ENCODE measurements at regions of chr18 and their contacts with region 1.

Region 1: DNA sequence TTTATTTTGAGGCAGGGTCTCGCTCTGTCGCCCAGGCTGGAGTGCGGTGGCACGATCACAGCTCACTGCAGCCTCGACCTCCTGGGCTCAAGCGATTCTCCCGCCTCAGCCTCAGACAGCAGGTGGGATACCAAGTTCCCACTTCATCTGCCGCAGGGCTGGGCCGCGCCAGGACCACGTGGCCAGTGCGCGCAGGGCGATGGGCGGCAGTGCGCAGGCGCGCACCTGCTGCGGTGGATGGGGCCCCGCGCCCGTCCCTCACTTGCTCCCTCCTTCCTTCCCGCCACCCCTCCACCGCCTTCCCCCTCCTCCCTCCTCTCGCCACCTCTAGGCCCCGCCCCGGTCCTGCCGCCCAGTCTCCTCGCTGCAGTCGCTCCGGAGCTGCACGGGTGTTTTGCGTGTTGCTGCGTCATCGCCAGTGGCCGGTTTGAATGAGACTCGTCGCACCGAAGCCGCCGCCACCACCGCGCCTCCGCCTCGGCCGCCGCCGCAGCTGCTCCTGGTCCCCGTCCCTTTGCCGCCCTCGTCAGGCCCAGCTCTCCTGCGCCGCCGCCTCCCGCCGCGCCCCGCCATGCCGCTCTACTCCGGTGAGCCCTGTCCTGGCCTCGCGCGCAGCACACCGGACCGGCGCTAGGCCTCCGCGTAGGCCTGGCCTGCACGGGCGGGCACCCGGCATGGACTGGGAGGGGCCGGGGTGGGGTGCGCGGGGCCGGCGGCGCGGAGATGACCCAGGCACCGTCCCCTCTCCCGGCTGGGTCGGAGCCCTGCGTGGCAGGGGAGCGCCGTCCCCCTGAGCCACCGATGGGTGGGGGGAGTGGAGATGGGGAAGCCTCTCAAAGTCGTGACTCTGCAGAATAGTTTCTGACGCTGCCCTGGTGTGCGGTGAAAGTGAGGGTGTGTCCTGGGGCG is at the start of gene USP14:
- DNase-seq: peak; percentile 96 to 98 (median 97)
- ATAC-seq: peak; percentile 94 to 99 (median 98)
- H3K4me3 ChIP-seq: peak within 1 kb of the TSS; percentile 75 to 97 (median 87)
- H3K27ac ChIP-seq: peak within 1 kb of the TSS; percentile 20 to 91 (median 83)
- H3K4me1 ChIP-seq: peaks cover 0 to 27% (median 15%) of the 10 kb centered on the region in 12 donors
- H3K27me3 ChIP-seq: no peaks in the 10 kb centered on the region
- CTCF ChIP-seq: peak in 2 of 12 donors; percentile 20 to 28
- POLR2A ChIP-seq: peak in 1 of 2 donors; percentile 44
- total RNA-seq, gene USP14: 19.1 to 61.5 (median 48.9) TPM

Region 2: GRCh38 chr18:136433-136832 is 21.9 kb before region 1 on chr18:
- intact Hi-C with region 1: loop called in 1 of 10 experiments (anchors 2 kb)
- DNase-seq: no peak
- ATAC-seq: no peak
- H3K4me3 ChIP-seq: no peak overlapping the region
- H3K27ac ChIP-seq: no peak overlapping the region
- H3K4me1 ChIP-seq: no peaks in the 10 kb centered on the region
- H3K27me3 ChIP-seq: no peaks in the 10 kb centered on the region
- CTCF ChIP-seq: no peak
- POLR2A ChIP-seq: no peak

Region 3: DNA sequence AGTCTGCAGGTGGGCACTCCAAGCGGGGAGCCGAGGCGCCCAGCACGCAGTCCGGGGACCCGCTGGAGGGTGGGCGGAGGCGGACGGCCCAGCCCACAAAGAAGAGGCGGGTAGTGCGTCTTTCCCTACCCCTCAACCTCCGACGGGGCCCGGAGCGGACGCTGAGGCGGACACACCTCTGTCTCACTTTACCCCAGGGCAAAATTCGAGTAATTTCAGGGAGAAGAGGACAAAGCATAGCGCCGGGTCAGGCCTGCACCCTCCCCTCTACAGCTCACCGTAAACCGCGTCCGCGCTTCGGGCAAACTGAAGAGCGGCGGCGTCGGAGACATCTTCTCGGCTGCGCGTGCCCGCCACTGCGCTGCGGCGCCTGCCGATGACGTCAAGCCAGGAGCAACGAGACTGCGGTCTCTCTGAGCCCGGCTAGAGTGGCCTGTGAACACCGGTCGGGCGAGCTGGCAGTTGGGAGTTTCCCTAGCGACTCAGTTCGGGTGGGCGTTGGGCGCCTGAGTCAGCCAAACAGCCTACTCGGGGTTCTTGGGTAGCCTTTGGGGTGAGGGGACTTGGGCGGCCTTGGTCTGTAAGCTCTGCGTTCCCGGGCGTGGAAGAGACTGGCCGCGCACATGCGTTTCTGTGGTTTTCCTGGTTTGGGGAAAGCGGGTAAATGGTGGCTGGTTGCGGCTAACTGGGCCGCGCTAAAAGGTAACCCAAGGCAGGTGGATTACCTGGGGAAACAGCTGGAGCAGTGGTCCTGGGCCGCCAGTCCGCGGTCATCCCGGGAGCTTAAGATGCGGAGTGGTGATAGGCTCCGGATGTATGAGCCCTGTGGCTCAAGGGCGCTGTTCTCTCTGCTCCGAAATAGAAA is 109.5 kb after region 1 on chr18 and contains the start of gene THOC1:
- intact Hi-C with region 1: loop called in 3 of 10 experiments (anchors 5 kb)
- DNase-seq: peak; percentile 93 to 96 (median 95)
- ATAC-seq: peak; percentile 97 to 99 (median 98)
- H3K4me3 ChIP-seq: peak within 1 kb of the TSS; percentile 65 to 100 (median 90)
- H3K27ac ChIP-seq: peak within 1 kb of the TSS; percentile 78 to 96 (median 90)
- H3K4me1 ChIP-seq: peaks cover 0 to 24% (median 16%) of the 10 kb centered on the region in 12 donors
- H3K27me3 ChIP-seq: no peaks in the 10 kb centered on the region
- CTCF ChIP-seq: no peak
- POLR2A ChIP-seq: peak in 1 of 2 donors; percentile 76
- total RNA-seq, gene THOC1: 6.4 to 17.7 (median 9.6) TPM